ENCODE measurements at regions of chr15 and their contacts with region 1.

Region 1: DNA sequence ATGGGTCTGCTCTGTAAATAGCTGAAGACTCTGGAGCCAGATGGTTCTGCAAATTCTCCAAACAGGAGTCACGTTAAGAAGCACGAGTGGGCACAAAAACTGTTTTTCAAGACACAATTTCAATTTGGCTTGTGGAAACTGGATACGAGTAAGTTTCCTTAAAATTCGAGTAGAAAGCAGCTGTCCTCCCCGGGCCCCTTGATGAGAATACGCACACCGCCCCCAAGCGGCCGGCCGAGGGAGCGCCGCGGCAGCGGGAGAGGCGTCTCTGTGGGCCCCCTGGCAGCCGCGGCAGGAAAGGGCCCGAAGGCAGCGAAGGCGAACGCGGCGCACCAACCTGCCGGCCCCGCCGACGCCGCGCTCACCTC is 778 bp upstream of the THBS1 start:
- DNase-seq: no peak
- ATAC-seq: peak; percentile 94
- H3K4me3 ChIP-seq: peak overlapping the region; percentile 58; the same call in 1 of the 2 replicates
- H3K27ac ChIP-seq: no peak overlapping the region
- H3K4me1 ChIP-seq: no peaks in the 10 kb centered on the region
- H3K27me3 ChIP-seq: peaks cover 4 to 5% of the 10 kb centered on the region in 2 experiments; a peak in 3 of 4 replicates
- CTCF ChIP-seq: peak; percentile 90 to 98 (median 91)
- EP300 ChIP-seq: no peak
- POLR2A ChIP-seq: no peak
- RAD21 ChIP-seq: peak; percentile 94

Region 2: GRCh38 chr15:38707802-38708671 is 872.1 kb before region 1 on chr15:
- CTCF ChIA-PET with region 1: interaction called, 7 read pairs
- POLR2A ChIA-PET with region 1: no interaction called
- RAD21 ChIA-PET with region 1: no interaction called
- SMC1A ChIA-PET with region 1: no interaction called
- in situ Hi-C with region 1: loop called (anchors 5 kb)
- intact Hi-C with region 1: loop called (anchors 5 kb)
- DNase-seq: no peak
- ATAC-seq: peak; percentile 98
- H3K4me3 ChIP-seq: no peak overlapping the region
- H3K27ac ChIP-seq: no peak overlapping the region
- H3K4me1 ChIP-seq: no peaks in the 10 kb centered on the region
- H3K27me3 ChIP-seq: no peaks in the 10 kb centered on the region
- CTCF ChIP-seq: peak; percentile 75 to 82 (median 76)
- EP300 ChIP-seq: no peak
- POLR2A ChIP-seq: no peak
- RAD21 ChIP-seq: peak; percentile 91

Region 3: DNA sequence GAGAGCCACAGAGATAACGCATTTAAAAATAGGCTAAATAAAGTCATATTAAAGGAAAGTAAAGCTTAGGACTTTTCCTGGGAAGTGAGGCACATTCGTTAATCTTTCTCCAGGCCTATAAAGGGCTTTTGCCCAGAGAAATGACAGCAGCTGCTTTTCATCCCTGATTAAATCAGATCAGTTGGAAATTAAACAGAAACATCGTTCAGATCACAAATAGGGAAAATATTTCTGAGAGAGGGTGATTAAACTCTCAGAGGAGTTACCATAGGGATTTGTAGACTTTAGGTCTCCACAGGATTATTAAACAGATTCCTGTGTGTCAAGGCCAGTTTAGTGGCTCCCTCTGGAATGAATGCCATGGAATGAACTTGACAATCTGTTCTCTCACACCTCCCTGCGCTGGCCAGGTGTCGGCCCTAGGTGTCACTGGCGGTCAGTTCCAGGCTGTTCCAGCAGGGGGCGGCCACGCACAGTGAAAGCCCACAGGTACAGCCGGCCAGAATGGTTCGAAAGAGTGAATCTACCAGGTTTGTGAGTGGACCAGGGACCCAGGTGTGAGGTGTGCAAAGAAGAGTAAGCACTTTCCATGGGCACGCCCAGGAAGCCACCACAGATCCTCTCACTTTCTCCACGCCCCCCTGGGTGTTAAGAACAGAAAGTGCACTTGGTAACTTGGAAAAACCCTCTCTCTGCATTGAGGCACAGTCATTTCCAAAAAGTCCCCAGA is 762.5 kb before region 1 on chr15:
- CTCF ChIA-PET with region 1: interaction called, 8 read pairs
- POLR2A ChIA-PET with region 1: no interaction called
- RAD21 ChIA-PET with region 1: no interaction called
- SMC1A ChIA-PET with region 1: interaction called, 3 read pairs
- in situ Hi-C with region 1: loop called (anchors 25 kb)
- intact Hi-C with region 1: loop called (anchors 2 kb)
- DNase-seq: peak; percentile 36
- ATAC-seq: peak; percentile 97
- H3K4me3 ChIP-seq: no peak overlapping the region
- H3K27ac ChIP-seq: no peak overlapping the region
- H3K4me1 ChIP-seq: no peaks in the 10 kb centered on the region
- H3K27me3 ChIP-seq: peaks cover 0 to 2% of the 10 kb centered on the region in 2 experiments; a peak in 1 of 4 replicates
- CTCF ChIP-seq: peak; percentile 95 to 99 (median 99)
- EP300 ChIP-seq: no peak
- POLR2A ChIP-seq: no peak
- RAD21 ChIP-seq: peak; percentile 77

Region 4: GRCh38 chr15:39171944-39172368 is 408.1 kb before region 1 on chr15:
- CTCF ChIA-PET with region 1: interaction called, 10 read pairs
- POLR2A ChIA-PET with region 1: no interaction called
- RAD21 ChIA-PET with region 1: interaction called, 13 read pairs
- SMC1A ChIA-PET with region 1: interaction called, 8 read pairs
- in situ Hi-C with region 1: no loop called
- intact Hi-C with region 1: loop called (anchors 2 kb)
- DNase-seq: peak; percentile 19
- ATAC-seq: peak; percentile 70
- H3K4me3 ChIP-seq: no peak overlapping the region
- H3K27ac ChIP-seq: no peak overlapping the region
- H3K4me1 ChIP-seq: peaks cover 10% of the 10 kb centered on the region
- H3K27me3 ChIP-seq: no peaks in the 10 kb centered on the region
- CTCF ChIP-seq: peak in 2 of 3 experiments; percentile 26 to 53; a peak in 4 of 6 replicates
- EP300 ChIP-seq: no peak
- POLR2A ChIP-seq: no peak
- RAD21 ChIP-seq: peak; percentile 60

Region 5: DNA sequence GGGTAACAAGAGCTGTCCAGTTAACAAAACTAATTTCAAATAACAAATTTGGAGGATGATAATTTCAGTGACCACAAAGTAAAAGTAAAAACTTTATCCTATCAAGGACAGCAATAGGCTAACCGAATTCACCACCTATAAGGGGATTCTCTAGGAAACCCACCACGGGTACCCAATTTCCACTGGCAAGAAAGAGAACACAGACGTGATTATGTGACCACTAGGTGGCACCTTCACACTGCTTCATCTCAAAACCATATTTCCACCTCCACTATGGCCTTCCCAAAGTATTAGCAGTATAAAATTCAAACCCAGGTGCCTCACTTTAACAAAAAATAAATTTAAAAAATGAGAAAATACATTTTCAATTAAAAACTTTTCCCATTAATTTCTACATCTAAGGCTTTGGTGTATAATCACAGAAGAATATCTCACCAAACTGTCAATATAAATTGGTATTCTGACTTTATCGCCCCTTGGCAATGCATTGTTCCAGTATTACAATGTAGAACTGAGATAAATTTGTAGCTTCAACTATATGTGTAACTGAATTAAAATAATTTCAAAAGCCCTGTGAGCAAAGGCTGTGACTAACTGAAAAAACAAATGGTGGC is 106.0 kb after region 1 on chr15:
- CTCF ChIA-PET with region 1: interaction called, 5 read pairs
- POLR2A ChIA-PET with region 1: interaction called, 3 read pairs
- RAD21 ChIA-PET with region 1: interaction called, 4 read pairs
- SMC1A ChIA-PET with region 1: interaction called, 4 read pairs
- in situ Hi-C with region 1: no loop called
- intact Hi-C with region 1: loop called (anchors 5 kb)
- DNase-seq: no peak
- ATAC-seq: peak; percentile 84
- H3K4me3 ChIP-seq: no peak overlapping the region
- H3K27ac ChIP-seq: no peak overlapping the region
- H3K4me1 ChIP-seq: no peaks in the 10 kb centered on the region
- H3K27me3 ChIP-seq: no peaks in the 10 kb centered on the region; a peak in 1 of 4 replicates
- CTCF ChIP-seq: peak; percentile 61 to 78 (median 65)
- EP300 ChIP-seq: no peak
- POLR2A ChIP-seq: no peak
- RAD21 ChIP-seq: peak; percentile 79

Measured in GM12878 (cell line).